ENCODE measurements at regions of chr6 and their contacts with region 1.

Region 1: DNA sequence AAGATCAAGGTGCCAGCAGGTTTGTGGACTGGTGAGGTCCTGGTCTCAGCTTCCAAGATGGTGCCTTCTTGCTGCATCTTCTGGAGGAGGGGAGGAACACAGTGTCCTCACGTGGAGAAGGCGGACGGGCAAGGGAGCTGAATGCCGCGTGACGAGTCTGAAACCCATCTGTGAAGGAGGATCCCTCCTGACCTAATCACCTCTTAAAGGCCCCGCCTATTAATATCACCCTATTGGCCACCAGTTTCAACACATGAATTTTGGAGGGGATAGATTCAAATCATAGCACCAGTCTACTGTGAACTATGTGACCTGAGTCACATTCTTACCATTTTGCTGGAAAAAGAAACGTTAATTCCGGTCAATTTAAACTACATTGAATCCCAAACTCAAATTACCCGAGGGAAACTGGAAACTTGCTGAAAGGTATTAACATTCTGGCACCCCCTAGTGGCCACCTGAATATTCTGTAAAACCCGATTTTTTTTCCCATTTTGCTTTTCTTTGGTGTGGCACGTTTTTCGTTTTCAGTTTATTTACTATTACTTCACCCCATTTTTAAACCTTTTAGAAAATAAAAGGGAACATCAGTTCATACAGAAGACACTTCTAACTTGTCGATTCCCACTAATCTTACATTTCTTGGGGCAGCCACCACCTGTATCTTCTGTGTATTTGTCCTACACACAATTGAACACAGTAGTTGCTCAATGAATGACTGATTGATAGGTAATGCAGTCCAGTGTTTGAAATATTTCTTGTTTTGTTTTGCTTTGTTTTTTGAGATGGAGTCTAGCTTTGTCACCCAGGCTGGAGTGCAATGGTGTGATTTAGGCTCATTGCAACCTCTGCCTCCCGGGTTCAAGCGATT is 17.9 kb upstream of the CCDC170 start:
- DNase-seq: no peak
- H3K4me3 Mint-ChIP-seq: no peak overlapping the region
- H3K27ac Mint-ChIP-seq: no peak overlapping the region
- H3K4me1 Mint-ChIP-seq: peaks cover 7% of the 10 kb centered on the region
- H3K27me3 Mint-ChIP-seq: no peaks in the 10 kb centered on the region

Region 2: DNA sequence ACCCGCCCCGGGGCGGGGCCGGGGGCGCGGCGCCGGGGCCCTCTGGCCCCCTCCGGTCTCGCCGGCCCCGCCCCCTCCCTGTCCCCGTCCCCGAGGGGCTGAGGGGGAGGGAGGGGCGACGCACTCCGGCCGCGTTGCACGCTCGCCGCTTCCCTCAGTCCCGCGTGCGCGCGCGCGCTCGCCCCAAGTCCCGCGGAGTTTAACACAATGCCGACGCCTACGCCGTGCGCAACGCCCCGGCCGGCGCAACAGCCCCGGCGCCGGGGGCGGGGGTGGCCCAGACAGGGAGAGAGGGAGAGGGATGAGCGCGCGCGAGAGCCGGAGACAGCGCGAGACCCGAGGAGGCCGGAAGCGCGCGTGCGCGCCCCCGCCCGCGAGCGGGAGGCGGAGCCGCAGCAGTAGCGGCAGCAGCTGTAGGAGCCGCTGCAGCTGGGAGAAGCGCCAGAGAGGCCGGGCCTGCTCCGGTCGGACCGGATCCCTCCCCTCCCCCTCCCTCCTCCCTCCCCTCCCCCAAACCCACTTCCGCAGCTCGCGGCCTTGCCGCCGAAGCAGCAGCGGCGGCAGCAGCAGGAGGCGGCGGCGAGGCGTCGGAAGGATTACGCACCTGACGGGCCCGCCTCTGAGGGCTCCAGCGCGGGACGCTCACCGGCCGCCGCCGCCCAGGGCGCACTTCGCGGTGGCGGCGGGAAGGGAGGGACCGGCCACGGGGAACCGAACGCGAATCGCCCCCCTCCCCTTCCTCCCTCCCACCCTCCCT is 85.4 kb before region 1 on chr6:
- intact Hi-C with region 1: no loop called
- DNase-seq: peak; percentile 98
- H3K4me3 Mint-ChIP-seq: peak overlapping the region; percentile 49
- H3K27ac Mint-ChIP-seq: peak overlapping the region; percentile 55
- H3K4me1 Mint-ChIP-seq: peaks cover 48% of the 10 kb centered on the region
- H3K27me3 Mint-ChIP-seq: no peaks in the 10 kb centered on the region

Region 3: DNA sequence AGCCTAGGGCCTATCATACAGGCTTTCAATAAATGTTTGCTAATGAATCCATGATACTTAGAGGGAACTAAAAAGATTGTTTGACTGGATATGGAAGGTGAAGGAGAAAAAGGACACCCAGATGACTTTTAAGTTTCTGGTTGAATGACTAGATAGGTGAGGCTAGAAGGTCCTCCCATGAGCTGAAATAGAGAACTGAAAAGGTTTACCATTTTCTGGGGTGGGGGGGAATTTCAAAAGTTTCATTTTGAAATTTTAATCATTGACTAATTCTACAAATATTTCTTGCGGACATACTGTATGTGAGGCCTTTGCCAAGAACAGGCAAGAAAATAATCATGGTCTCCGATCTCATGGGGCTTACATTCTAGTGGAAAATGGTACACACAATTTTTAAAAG is 66.6 kb before region 1 on chr6:
- intact Hi-C with region 1: loop called (anchors 5 kb)
- DNase-seq: no peak
- H3K4me3 Mint-ChIP-seq: no peak overlapping the region
- H3K27ac Mint-ChIP-seq: no peak overlapping the region
- H3K4me1 Mint-ChIP-seq: peaks cover 8% of the 10 kb centered on the region
- H3K27me3 Mint-ChIP-seq: no peaks in the 10 kb centered on the region

Region 4: DNA sequence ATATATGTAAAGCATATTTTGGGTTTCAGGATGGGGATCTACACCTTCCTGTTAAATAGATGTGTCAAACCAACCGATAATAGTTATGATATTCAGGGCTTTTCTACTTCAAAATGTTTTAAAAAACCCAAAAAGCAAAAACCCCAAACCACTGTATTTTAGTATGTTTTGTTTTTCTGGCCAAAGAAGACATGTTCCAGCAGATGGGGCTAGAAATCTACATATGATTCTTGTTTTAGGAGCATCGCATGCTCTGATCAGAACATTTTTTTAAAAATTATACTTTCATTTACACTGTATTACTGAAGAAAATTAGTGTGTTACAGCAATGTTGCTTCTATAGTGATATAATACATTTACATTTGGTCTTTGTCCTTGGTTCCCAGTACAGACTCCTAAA is 35.0 kb before region 1 on chr6:
- intact Hi-C with region 1: loop called (anchors 2 kb)
- DNase-seq: no peak
- H3K4me3 Mint-ChIP-seq: no peak overlapping the region
- H3K27ac Mint-ChIP-seq: no peak overlapping the region
- H3K4me1 Mint-ChIP-seq: peaks cover 22% of the 10 kb centered on the region
- H3K27me3 Mint-ChIP-seq: no peaks in the 10 kb centered on the region

Region 5: DNA sequence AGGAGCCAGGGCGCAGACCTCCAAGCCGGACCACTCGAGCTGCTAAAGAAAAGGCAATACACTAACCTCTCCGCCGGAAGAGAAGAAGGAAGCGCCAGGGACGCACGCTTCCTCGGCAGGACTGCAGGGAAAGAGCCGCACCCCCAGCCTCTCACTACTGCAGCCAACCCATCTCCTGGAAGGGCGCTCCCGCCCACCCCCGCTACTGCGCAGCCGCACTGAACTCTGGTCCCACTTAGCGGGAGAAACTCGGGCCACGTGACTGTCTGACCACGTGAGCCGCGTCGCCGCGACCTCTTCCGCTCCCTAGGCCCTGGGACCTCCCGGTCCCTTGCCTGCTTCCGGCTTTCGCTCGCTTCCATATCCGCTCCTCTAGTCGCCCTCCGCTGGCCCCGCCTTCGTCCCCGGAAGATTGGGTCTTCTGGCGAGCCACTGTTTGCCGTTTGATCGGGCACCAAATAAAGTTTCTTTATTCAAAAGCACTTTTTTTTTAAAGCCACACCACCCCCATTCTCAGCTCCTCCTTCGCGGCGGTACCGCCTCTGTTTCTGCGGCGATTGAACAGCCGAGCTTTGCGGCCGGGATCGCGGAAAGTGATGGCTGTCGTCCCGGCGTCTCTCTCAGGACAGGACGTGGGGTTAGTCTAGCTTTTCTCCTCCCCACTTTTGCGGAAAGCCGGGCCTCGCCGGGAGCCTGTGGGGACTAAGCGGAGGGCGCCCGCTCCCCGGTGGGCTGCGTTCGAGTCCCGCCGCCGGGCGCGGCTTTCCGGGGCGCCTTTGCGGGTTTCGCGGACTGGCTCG is 23.7 kb before region 1 on chr6 and contains the start of gene RMND1:
- intact Hi-C with region 1: loop called (anchors 1 kb)
- DNase-seq: peak; percentile 99
- H3K4me3 Mint-ChIP-seq: peak within 1 kb of the TSS; percentile 97
- H3K27ac Mint-ChIP-seq: peak within 1 kb of the TSS; percentile 82
- H3K4me1 Mint-ChIP-seq: peaks cover 27% of the 10 kb centered on the region
- H3K27me3 Mint-ChIP-seq: no peaks in the 10 kb centered on the region
- total RNA-seq, gene RMND1: 18.5 and 20.5 TPM in 2 replicates